Left colon (tissue), 2 donors: ENCODE measurements at regions of chr2 and their contacts with region 1.

Region 1: GRCh38 chr2:177263451-177264208 is 897 bp downstream of the NFE2L2 start:
- DNase-seq: peak; percentile 98 to 100
- ATAC-seq: peak; percentile 66

Region 2: GRCh38 chr2:177147093-177147694 is 116.4 kb before region 1 on chr2:
- intact Hi-C with region 1: no loop called
- DNase-seq: no peak
- ATAC-seq: peak; percentile 72

Region 3: DNA sequence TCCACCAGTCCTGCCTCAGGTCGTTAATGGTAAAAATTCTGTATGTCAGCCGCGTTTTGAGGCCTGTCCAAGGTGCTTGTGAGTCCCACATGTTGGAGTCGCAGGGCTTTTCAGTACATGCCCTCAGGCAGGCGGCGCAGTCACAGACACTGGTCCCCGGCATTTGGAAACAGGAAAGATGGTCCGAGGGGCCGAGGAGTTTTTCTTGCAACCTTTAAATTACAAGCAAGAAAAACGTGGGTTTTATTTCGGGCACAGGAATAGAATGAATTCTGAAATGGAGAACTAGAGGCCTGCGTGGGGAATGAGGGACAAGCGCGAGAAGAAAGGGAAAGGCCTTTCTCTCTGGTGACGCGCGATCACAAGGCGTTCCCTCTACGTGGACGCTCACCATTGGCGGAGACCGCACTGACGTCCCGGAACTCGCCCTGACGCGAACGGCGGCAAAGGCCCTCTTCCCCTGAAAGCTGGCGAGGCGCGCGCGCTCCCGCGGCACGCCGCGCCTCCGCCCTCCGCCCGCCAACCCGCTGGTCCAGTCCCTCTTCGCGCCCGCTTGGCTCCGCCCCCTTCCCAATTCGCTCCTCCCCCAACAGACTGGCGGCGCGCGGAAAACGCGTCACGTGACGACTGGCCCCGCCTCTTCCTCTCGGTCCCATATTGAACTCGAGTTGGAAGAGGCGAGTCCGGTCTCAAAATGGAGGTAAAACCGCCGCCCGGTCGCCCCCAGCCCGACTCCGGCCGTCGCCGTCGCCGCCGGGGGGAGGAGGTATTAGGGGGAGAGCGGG is 51.3 kb before region 1 on chr2 and contains the start of gene HNRNPA3:
- intact Hi-C with region 1: loop called in 1 of 2 experiments (anchors 10 kb)
- DNase-seq: peak; percentile 99
- ATAC-seq: peak; percentile 89
- total RNA-seq, gene HNRNPA3: 107 to 177 TPM